MCF 10A (cell line): ENCODE measurements at regions of chr7 and their contacts with region 1.

Region 1: GRCh38 chr7:106176414-106177299 is 64.5 kb upstream of the SYPL1 start:
- DNase-seq: peak; percentile 79
- H3K4me3 Mint-ChIP-seq: no peak overlapping the region
- H3K27ac Mint-ChIP-seq: no peak overlapping the region
- H3K4me1 Mint-ChIP-seq: peaks cover 16% of the 10 kb centered on the region
- H3K27me3 Mint-ChIP-seq: peaks cover 11% of the 10 kb centered on the region
- CTCF ChIP-seq: peak; percentile 92

Region 2: GRCh38 chr7:106196460-106197021 is 19.9 kb after region 1 on chr7:
- CTCF ChIA-PET with region 1: interaction called, 35 read pairs
- POLR2A ChIA-PET with region 1: no interaction called
- intact Hi-C with region 1: no loop called
- DNase-seq: peak; percentile 17
- H3K4me3 Mint-ChIP-seq: no peak overlapping the region
- H3K27ac Mint-ChIP-seq: no peak overlapping the region
- H3K4me1 Mint-ChIP-seq: no peaks in the 10 kb centered on the region
- H3K27me3 Mint-ChIP-seq: no peaks in the 10 kb centered on the region
- CTCF ChIP-seq: no peak

Region 3: DNA sequence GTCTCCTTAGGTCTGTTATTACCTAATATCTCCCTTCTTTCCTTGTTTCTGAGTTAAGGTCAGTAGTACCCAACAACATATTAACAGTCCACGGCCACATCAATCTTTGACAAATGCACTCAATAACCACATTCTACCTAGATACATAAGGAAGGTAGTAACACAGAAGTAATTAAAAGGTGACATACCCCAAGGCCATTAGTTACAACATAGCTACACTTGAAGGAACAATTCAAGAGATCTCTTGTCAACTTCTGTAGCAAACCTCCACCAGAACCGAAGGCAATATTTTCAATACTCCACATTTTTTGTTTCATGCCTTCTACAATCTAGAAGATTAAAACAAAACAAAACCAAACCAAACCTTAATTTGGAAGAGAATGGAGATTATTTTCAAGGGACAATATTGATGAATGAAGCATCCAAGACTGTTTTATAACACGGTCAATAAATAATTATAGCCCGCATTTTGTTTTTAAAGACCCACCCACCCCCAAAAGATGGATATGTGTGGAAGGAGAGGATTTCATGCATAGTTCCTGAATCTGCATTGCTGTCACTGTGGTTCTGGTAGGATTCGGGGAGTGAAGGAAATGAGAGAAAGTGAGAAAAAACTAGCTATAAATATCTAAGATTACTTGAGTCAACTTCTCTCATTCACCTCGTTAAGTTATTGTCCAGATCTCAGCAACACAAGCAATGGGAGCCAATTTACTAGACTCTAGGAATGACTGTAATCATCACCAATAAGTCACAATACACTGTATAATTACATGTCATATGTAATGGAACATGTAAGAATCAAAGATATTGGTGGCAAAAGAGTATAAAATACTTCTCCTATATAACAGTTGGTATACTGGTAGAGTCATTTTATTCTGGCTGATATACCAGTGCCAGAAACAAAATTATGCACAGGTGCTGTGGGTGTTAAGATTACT is 77.8 kb after region 1 on chr7:
- CTCF ChIA-PET with region 1: interaction called, 3 read pairs
- POLR2A ChIA-PET with region 1: no interaction called
- intact Hi-C with region 1: loop called (anchors 5 kb)
- DNase-seq: no peak
- H3K4me3 Mint-ChIP-seq: no peak overlapping the region
- H3K27ac Mint-ChIP-seq: no peak overlapping the region
- H3K4me1 Mint-ChIP-seq: no peaks in the 10 kb centered on the region
- H3K27me3 Mint-ChIP-seq: no peaks in the 10 kb centered on the region
- CTCF ChIP-seq: no peak

Region 4: GRCh38 chr7:106448992-106449859 is 272.6 kb after region 1 on chr7:
- CTCF ChIA-PET with region 1: interaction called, 12 read pairs
- POLR2A ChIA-PET with region 1: no interaction called
- intact Hi-C with region 1: no loop called
- DNase-seq: no peak
- H3K4me3 Mint-ChIP-seq: no peak overlapping the region
- H3K27ac Mint-ChIP-seq: no peak overlapping the region
- H3K4me1 Mint-ChIP-seq: no peaks in the 10 kb centered on the region
- H3K27me3 Mint-ChIP-seq: no peaks in the 10 kb centered on the region
- CTCF ChIP-seq: no peak

Region 5: GRCh38 chr7:106659963-106660861 is 483.6 kb after region 1 on chr7:
- CTCF ChIA-PET with region 1: interaction called, 7 read pairs
- POLR2A ChIA-PET with region 1: no interaction called
- intact Hi-C with region 1: loop called (anchors 1 kb)
- DNase-seq: peak; percentile 81
- H3K4me3 Mint-ChIP-seq: peak overlapping the region; percentile 80
- H3K27ac Mint-ChIP-seq: peak overlapping the region; percentile 83
- H3K4me1 Mint-ChIP-seq: peaks cover 14% of the 10 kb centered on the region
- H3K27me3 Mint-ChIP-seq: no peaks in the 10 kb centered on the region
- CTCF ChIP-seq: peak; percentile 98

Region 6: DNA sequence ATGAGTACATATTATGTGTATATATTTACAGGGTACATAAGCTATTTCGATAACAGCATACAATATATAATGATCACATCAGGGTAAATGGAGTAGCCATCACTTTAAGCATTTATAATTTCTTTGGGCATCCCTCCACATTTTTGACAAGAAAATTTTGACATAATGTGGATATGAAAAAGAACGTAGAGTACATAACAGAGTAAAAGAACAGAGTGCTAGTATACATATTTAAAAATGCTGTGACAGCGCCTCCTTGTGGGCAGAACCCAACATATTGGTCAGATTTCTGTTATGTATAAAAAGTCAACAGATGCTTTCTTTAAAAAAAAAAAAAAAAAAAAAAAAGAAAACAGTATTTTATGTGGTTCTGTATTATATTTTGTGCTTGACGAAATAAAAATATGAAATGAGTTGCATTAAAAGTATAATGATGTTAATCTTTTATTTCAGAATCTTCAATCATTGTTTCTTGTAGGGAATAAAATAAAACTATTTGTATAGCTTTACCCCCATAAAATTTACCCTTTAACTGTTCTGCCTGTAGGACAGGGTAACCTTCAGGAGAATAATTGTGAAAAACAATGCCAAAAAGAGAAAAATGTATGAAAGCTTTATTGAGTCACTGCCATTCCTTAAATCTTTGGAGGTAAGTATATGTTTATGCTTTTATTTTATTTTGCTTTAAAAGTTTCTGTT is 973.9 kb after region 1 on chr7:
- CTCF ChIA-PET with region 1: interaction called, 4 read pairs
- POLR2A ChIA-PET with region 1: no interaction called
- intact Hi-C with region 1: loop called (anchors 10 kb)
- DNase-seq: peak; percentile 71
- H3K4me3 Mint-ChIP-seq: no peak overlapping the region
- H3K27ac Mint-ChIP-seq: no peak overlapping the region
- H3K4me1 Mint-ChIP-seq: peaks cover 12% of the 10 kb centered on the region
- H3K27me3 Mint-ChIP-seq: no peaks in the 10 kb centered on the region
- CTCF ChIP-seq: peak; percentile 59